ENCODE measurements at regions of chr6 and their contacts with region 1.

Region 1: GRCh38 chr6:92810913-92811312 is 608.4 kb downstream of the EPHA7 start:
- DNase-seq: peak; percentile 13
- ATAC-seq: peak; percentile 100
- H3K4me3 ChIP-seq: no peak overlapping the region
- H3K27ac ChIP-seq: no peak overlapping the region
- H3K4me1 ChIP-seq: no peaks in the 10 kb centered on the region
- H3K27me3 ChIP-seq: no peaks in the 10 kb centered on the region
- CTCF ChIP-seq: peak; percentile 60 to 69 (median 65)
- EP300 ChIP-seq: peak in 1 of 2 experiments; percentile 11; a peak in 1 of 4 replicates
- POLR2A ChIP-seq: no peak
- RAD21 ChIP-seq: peak; percentile 69

Region 2: GRCh38 chr6:92826633-92827032 is 15.7 kb after region 1 on chr6:
- CTCF ChIA-PET with region 1: interaction called, 22 read pairs
- POLR2A ChIA-PET with region 1: no interaction called
- RAD21 ChIA-PET with region 1: interaction called, 6 read pairs
- SMC1A ChIA-PET with region 1: interaction called, 23 read pairs
- in situ Hi-C with region 1: no loop called
- intact Hi-C with region 1: no loop called
- DNase-seq: peak; percentile 3
- ATAC-seq: peak; percentile 83
- H3K4me3 ChIP-seq: no peak overlapping the region
- H3K27ac ChIP-seq: no peak overlapping the region
- H3K4me1 ChIP-seq: no peaks in the 10 kb centered on the region
- H3K27me3 ChIP-seq: no peaks in the 10 kb centered on the region
- CTCF ChIP-seq: no peak
- EP300 ChIP-seq: no peak
- POLR2A ChIP-seq: no peak
- RAD21 ChIP-seq: no peak

Region 3: DNA sequence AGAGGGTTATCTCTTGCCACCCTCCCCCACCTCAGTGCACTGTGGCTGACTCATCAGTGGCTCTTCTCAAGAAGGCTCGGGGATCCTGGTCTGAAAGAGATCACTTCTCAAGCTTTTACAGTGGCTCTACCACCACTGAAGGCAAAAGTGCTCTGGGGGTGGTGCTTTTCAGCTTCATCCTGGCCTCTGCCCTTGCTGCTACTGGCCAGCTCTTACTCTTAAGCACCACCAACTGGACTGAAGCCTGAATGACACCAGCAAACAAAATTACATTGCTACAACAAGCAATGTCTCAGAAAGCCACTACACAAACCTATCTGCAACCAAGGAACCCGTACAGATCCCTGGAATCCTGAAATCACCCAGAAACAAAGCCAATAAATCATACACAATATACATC is 206.3 kb after region 1 on chr6:
- CTCF ChIA-PET with region 1: interaction called, 5 read pairs
- POLR2A ChIA-PET with region 1: no interaction called
- RAD21 ChIA-PET with region 1: interaction called, 10 read pairs
- SMC1A ChIA-PET with region 1: interaction called, 3 read pairs
- in situ Hi-C with region 1: no loop called
- intact Hi-C with region 1: no loop called
- DNase-seq: no peak
- ATAC-seq: peak; percentile 61
- H3K4me3 ChIP-seq: no peak overlapping the region
- H3K27ac ChIP-seq: no peak overlapping the region
- H3K4me1 ChIP-seq: no peaks in the 10 kb centered on the region
- H3K27me3 ChIP-seq: no peaks in the 10 kb centered on the region
- CTCF ChIP-seq: peak in 1 of 3 experiments; percentile 6; a peak in 1 of 6 replicates
- EP300 ChIP-seq: no peak
- POLR2A ChIP-seq: no peak
- RAD21 ChIP-seq: no peak

Region 4: GRCh38 chr6:93419304-93420162 is 608.6 kb after region 1 on chr6 and contains the start of gene EPHA7:
- CTCF ChIA-PET with region 1: interaction called, 35 read pairs
- POLR2A ChIA-PET with region 1: no interaction called
- RAD21 ChIA-PET with region 1: interaction called, 15 read pairs
- SMC1A ChIA-PET with region 1: interaction called, 19 read pairs
- in situ Hi-C with region 1: no loop called
- intact Hi-C with region 1: no loop called
- DNase-seq: no peak
- ATAC-seq: peak; percentile 88
- H3K4me3 ChIP-seq: peak within 1 kb of the TSS; percentile 36; the same call in 1 of the 2 replicates
- H3K27ac ChIP-seq: no peak within 1 kb of the TSS
- H3K4me1 ChIP-seq: no peaks in the 10 kb centered on the region
- H3K27me3 ChIP-seq: peaks cover 11 to 18% of the 10 kb centered on the region in 2 experiments; a peak in 3 of 4 replicates
- CTCF ChIP-seq: no peak
- EP300 ChIP-seq: no peak
- POLR2A ChIP-seq: no peak
- RAD21 ChIP-seq: no peak
- polyA plus RNA-seq, gene EPHA7: not detected

Measured in GM12878 (cell line).